ENCODE measurements at regions of chr16 and their contacts with region 1.

Region 1: GRCh38 chr16:82185012-82185411 is 15.0 kb upstream of the MPHOSPH6 start:
- DNase-seq: no peak
- ATAC-seq: no peak
- H3K4me3 ChIP-seq: no peak overlapping the region
- H3K27ac ChIP-seq: no peak overlapping the region
- H3K4me1 ChIP-seq: no peaks in the 10 kb centered on the region
- H3K27me3 ChIP-seq: peaks cover 5% of the 10 kb centered on the region
- CTCF ChIP-seq: no peak

Region 2: GRCh38 chr16:81885976-81886586 is 298.9 kb before region 1 on chr16:
- CTCF ChIA-PET with region 1: no interaction called
- POLR2A ChIA-PET with region 1: no interaction called
- in situ Hi-C with region 1: no loop called
- intact Hi-C with region 1: no loop called
- DNase-seq: no peak
- ATAC-seq: peak; percentile 89
- H3K4me3 ChIP-seq: no peak overlapping the region
- H3K27ac ChIP-seq: no peak overlapping the region
- H3K4me1 ChIP-seq: no peaks in the 10 kb centered on the region
- H3K27me3 ChIP-seq: no peaks in the 10 kb centered on the region
- CTCF ChIP-seq: peak; percentile 84

Region 3: GRCh38 chr16:82169861-82170845 is 14.9 kb before region 1 on chr16 and contains the start of gene MPHOSPH6:
- CTCF ChIA-PET with region 1: no interaction called
- POLR2A ChIA-PET with region 1: interaction called, 10 read pairs
- in situ Hi-C with region 1: no loop called
- intact Hi-C with region 1: no loop called
- DNase-seq: no peak
- ATAC-seq: peak; percentile 99
- H3K4me3 ChIP-seq: peak within 1 kb of the TSS; percentile 86 to 89
- H3K27ac ChIP-seq: peak within 1 kb of the TSS; percentile 94
- H3K4me1 ChIP-seq: no peaks in the 10 kb centered on the region
- H3K27me3 ChIP-seq: no peaks in the 10 kb centered on the region; the same call in 1 of the 2 replicates
- CTCF ChIP-seq: no peak
- total RNA-seq, gene MPHOSPH6: 36.7 TPM

Region 4: GRCh38 chr16:82300374-82300926 is 115.4 kb after region 1 on chr16:
- CTCF ChIA-PET with region 1: no interaction called
- POLR2A ChIA-PET with region 1: no interaction called
- in situ Hi-C with region 1: no loop called
- intact Hi-C with region 1: no loop called
- DNase-seq: no peak
- ATAC-seq: no peak
- H3K4me3 ChIP-seq: no peak overlapping the region
- H3K27ac ChIP-seq: no peak overlapping the region
- H3K4me1 ChIP-seq: no peaks in the 10 kb centered on the region
- H3K27me3 ChIP-seq: no peaks in the 10 kb centered on the region
- CTCF ChIP-seq: no peak

Measured in Panc1 (cell line).